Ovary (tissue), 10 donors: ENCODE measurements at regions of chr5 and their contacts with region 1.

Region 1: GRCh38 chr5:14208071-14209021 is 65.2 kb downstream of the TRIO start:
- DNase-seq: peak in 1 of 5 donors; percentile 38
- H3K4me3 ChIP-seq: peak overlapping the region; percentile 4
- H3K27ac ChIP-seq: peak overlapping the region in 1 of 2 donors; percentile 46
- H3K4me1 ChIP-seq: peaks cover 19% of the 10 kb centered on the region
- H3K27me3 ChIP-seq: no peaks in the 10 kb centered on the region
- CTCF ChIP-seq: no peak
- EP300 ChIP-seq: no peak
- POLR2A ChIP-seq: no peak

Region 2: GRCh38 chr5:14250084-14250695 is 41.8 kb after region 1 on chr5:
- intact Hi-C with region 1: loop called in 1 of 4 experiments (anchors 10 kb)
- DNase-seq: peak; percentile 80 to 89 (median 84)
- H3K4me3 ChIP-seq: peak overlapping the region; percentile 25
- H3K27ac ChIP-seq: peak overlapping the region; percentile 40 to 65
- H3K4me1 ChIP-seq: peaks cover 5% of the 10 kb centered on the region
- H3K27me3 ChIP-seq: no peaks in the 10 kb centered on the region
- CTCF ChIP-seq: no peak
- EP300 ChIP-seq: no peak
- POLR2A ChIP-seq: no peak

Region 3: GRCh38 chr5:15645381-15646160 is 1437.2 kb after region 1 on chr5:
- intact Hi-C with region 1: loop called in 1 of 4 experiments (anchors 5 kb)
- DNase-seq: no peak
- H3K4me3 ChIP-seq: no peak overlapping the region
- H3K27ac ChIP-seq: no peak overlapping the region
- H3K4me1 ChIP-seq: peaks cover 5% of the 10 kb centered on the region
- H3K27me3 ChIP-seq: no peaks in the 10 kb centered on the region
- CTCF ChIP-seq: no peak
- EP300 ChIP-seq: no peak
- POLR2A ChIP-seq: no peak